ENCODE measurements at regions of chr2 and their contacts with region 1.

Region 1: GRCh38 chr2:235402416-235402815 is 91.4 kb upstream of the AGAP1 start:
- DNase-seq: no peak
- H3K4me3 ChIP-seq: no peak overlapping the region
- CTCF ChIP-seq: no peak

Region 2: GRCh38 chr2:235439959-235440662 is 37.7 kb after region 1 on chr2:
- in situ Hi-C with region 1: loop called (anchors 5 kb)
- DNase-seq: no peak
- H3K4me3 ChIP-seq: no peak overlapping the region
- CTCF ChIP-seq: no peak

Measured in astrocyte of the cerebellum (primary cell).